ENCODE measurements at regions of chr7 and their contacts with region 1.

Region 1: GRCh38 chr7:136016649-136017395 is 39.7 kb upstream of the MTPN start:
- DNase-seq: no peak
- H3K4me3 Mint-ChIP-seq: no peak overlapping the region
- H3K27ac Mint-ChIP-seq: no peak overlapping the region
- H3K4me1 Mint-ChIP-seq: peaks cover 7% of the 10 kb centered on the region
- H3K27me3 Mint-ChIP-seq: peaks cover 17% of the 10 kb centered on the region

Region 2: GRCh38 chr7:136134503-136134902 is 117.7 kb after region 1 on chr7:
- intact Hi-C with region 1: loop called (anchors 5 kb)
- DNase-seq: no peak
- H3K4me3 Mint-ChIP-seq: no peak overlapping the region
- H3K27ac Mint-ChIP-seq: no peak overlapping the region
- H3K4me1 Mint-ChIP-seq: peaks cover 7% of the 10 kb centered on the region
- H3K27me3 Mint-ChIP-seq: no peaks in the 10 kb centered on the region

Region 3: GRCh38 chr7:136339464-136339863 is 322.6 kb after region 1 on chr7:
- intact Hi-C with region 1: no loop called
- DNase-seq: no peak
- H3K4me3 Mint-ChIP-seq: no peak overlapping the region
- H3K27ac Mint-ChIP-seq: no peak overlapping the region
- H3K4me1 Mint-ChIP-seq: no peaks in the 10 kb centered on the region
- H3K27me3 Mint-ChIP-seq: no peaks in the 10 kb centered on the region

Measured in activated T-helper 2 cell treated with anti-CD3 and anti-CD28 coated beads, Interferon-gamma antibody, Interleukin-2, Interleukin-4, amounts not matched to agents 10 μg/mL and 5 μg/mL and 100 μg/mL, durations not matched to agents 14 hours and 24 hours and 36 hours (primary cell).